IMR-90 (cell line): ENCODE measurements at regions of chr1 and their contacts with region 1.

Region 1: DNA sequence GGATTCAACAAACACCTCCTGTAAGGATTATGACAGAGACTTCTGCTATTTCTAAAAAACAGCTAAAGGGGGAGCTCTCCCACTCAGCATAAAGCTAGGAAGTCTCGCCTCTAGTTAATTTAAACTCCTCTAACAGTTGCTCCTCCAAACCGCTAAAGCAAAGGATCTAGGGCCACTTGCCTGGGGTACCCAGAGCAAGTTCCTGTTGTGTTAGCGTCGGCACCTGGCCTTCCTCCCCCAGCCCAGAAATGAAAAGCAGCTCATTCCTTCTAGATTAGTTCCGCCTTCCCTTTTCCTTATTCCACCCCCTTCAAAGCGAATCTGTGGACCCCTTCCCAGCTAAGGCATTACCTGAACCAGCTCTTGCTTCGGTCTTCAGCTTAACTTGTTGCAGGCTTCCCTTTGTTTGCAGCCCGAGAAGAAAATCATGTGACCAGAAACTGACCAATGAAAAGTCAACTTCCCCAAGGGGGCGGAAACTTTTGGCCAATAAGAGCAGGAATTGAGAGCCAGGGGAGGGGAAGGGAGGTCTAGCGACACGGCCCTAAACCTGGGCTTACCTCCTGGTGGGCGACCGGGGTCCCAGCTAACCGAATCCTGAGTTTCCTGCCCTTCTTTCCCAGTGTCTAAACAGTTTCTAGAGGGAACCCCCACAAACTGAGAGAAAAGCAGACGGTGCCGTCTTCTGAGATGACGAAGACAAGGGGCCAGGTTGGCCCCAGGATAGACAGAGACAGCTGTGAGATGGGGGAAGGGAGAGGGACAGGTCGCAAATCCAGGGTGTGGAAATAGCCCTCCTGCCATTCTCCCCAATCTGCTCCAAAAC is at the start of gene PBXIP1:
- DNase-seq: peak; percentile 87
- ATAC-seq: peak; percentile 84
- H3K4me3 ChIP-seq: peak within 1 kb of the TSS; percentile 59
- H3K27ac ChIP-seq: peak within 1 kb of the TSS; percentile 72
- H3K4me1 ChIP-seq: peaks cover 15% of the 10 kb centered on the region
- H3K27me3 ChIP-seq: no peaks in the 10 kb centered on the region
- CTCF ChIP-seq: peak; percentile 48
- POLR2A ChIP-seq: peak; percentile 37; the same call in 1 of the 2 replicates
- RAD21 ChIP-seq: peak; percentile 42
- total RNA-seq, gene PBXIP1: 24.2 and 28.3 TPM in 2 replicates

Region 2: GRCh38 chr1:154982897-154983648 is 27.1 kb after region 1 on chr1 and contains the start of gene FLAD1:
- CTCF ChIA-PET with region 1: no interaction called
- POLR2A ChIA-PET with region 1: interaction called, 11 read pairs
- dilution Hi-C with region 1: no loop called
- in situ Hi-C with region 1: no loop called
- intact Hi-C with region 1: no loop called
- DNase-seq: peak; percentile 100
- ATAC-seq: peak; percentile 100
- H3K4me3 ChIP-seq: peak within 1 kb of the TSS; percentile 78
- H3K27ac ChIP-seq: peak within 1 kb of the TSS; percentile 40
- H3K4me1 ChIP-seq: peaks cover 3% of the 10 kb centered on the region
- H3K27me3 ChIP-seq: no peaks in the 10 kb centered on the region
- CTCF ChIP-seq: no peak
- POLR2A ChIP-seq: no peak
- RAD21 ChIP-seq: no peak; the same call in 1 of the 2 replicates
- total RNA-seq, gene FLAD1: 19.7 and 26.3 TPM in 2 replicates

Region 3: GRCh38 chr1:155017041-155017945 is 61.4 kb after region 1 on chr1:
- CTCF ChIA-PET with region 1: no interaction called
- POLR2A ChIA-PET with region 1: interaction called, 7 read pairs
- dilution Hi-C with region 1: no loop called
- in situ Hi-C with region 1: no loop called
- intact Hi-C with region 1: loop called (anchors 1 kb)
- DNase-seq: peak; percentile 83
- ATAC-seq: peak; percentile 94
- H3K4me3 ChIP-seq: peak overlapping the region; percentile 41
- H3K27ac ChIP-seq: peak overlapping the region; percentile 41
- H3K4me1 ChIP-seq: peaks cover 6% of the 10 kb centered on the region; the same call in 1 of the 2 replicates
- H3K27me3 ChIP-seq: no peaks in the 10 kb centered on the region
- CTCF ChIP-seq: peak; percentile 100; the same call in 1 of the 2 replicates
- POLR2A ChIP-seq: no peak
- RAD21 ChIP-seq: peak; percentile 83

Region 4: GRCh38 chr1:155050560-155051341 is 94.8 kb after region 1 on chr1 and contains the start of gene ADAM15:
- CTCF ChIA-PET with region 1: no interaction called
- POLR2A ChIA-PET with region 1: no interaction called
- dilution Hi-C with region 1: no loop called
- in situ Hi-C with region 1: loop called (anchors 10 kb)
- intact Hi-C with region 1: no loop called
- DNase-seq: peak; percentile 53
- ATAC-seq: peak; percentile 85
- H3K4me3 ChIP-seq: peak within 1 kb of the TSS; percentile 75
- H3K27ac ChIP-seq: peak within 1 kb of the TSS; percentile 43; the same call in 1 of the 2 replicates
- H3K4me1 ChIP-seq: peaks cover 8% of the 10 kb centered on the region
- H3K27me3 ChIP-seq: no peaks in the 10 kb centered on the region
- CTCF ChIP-seq: peak; percentile 85
- POLR2A ChIP-seq: no peak
- RAD21 ChIP-seq: peak; percentile 53
- total RNA-seq, gene ADAM15: 25.6 and 29.7 TPM in 2 replicates

Region 5: DNA sequence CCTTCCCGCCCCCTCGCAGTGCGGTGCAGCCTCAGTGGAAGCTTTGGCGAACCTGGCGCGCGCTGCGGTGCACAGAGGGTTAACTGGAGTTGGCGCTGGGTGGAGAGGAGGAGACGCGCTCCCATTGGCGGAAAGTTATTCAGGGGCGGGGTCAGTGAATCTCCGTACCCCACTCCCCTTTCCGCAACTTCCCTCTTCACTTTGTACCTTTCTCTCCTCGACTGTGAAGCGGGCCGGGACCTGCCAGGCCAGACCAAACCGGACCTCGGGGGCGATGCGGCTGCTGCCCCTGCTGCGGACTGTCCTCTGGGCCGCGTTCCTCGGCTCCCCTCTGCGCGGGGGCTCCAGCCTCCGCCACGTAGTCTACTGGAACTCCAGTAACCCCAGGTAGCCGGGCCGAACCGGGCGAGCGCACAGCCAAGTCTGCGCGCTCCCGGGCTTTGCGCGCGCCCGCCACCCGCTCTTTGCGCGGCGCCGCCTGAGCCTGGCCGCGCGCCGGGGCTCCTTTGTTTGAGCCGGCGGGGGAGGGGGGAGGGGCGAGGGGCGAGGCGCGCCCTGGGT is 107.7 kb after region 1 on chr1 and contains the start of gene EFNA4:
- CTCF ChIA-PET with region 1: no interaction called
- POLR2A ChIA-PET with region 1: interaction called, 4 read pairs
- dilution Hi-C with region 1: no loop called
- in situ Hi-C with region 1: loop called (anchors 10 kb)
- intact Hi-C with region 1: loop called (anchors 5 kb)
- DNase-seq: peak; percentile 80
- ATAC-seq: peak; percentile 91
- H3K4me3 ChIP-seq: peak within 1 kb of the TSS; percentile 90
- H3K27ac ChIP-seq: peak within 1 kb of the TSS; percentile 44
- H3K4me1 ChIP-seq: peaks cover 4% of the 10 kb centered on the region; the same call in 1 of the 2 replicates
- H3K27me3 ChIP-seq: no peaks in the 10 kb centered on the region
- CTCF ChIP-seq: no peak
- POLR2A ChIP-seq: peak; percentile 53; the same call in 1 of the 2 replicates
- RAD21 ChIP-seq: no peak
- total RNA-seq, gene EFNA4: 3.3 and 3.8 TPM in 2 replicates